Esophagus muscularis mucosa (tissue), 4 donors: ENCODE measurements at regions of chr19 and their contacts with region 1.

Region 1: GRCh38 chr19:48674921-48675824 is 2.4 kb upstream of the NTN5 start:
- DNase-seq: peak; percentile 93
- H3K4me3 ChIP-seq: peak overlapping the region in 2 of 4 donors; percentile 1 to 2
- H3K27ac ChIP-seq: no peak overlapping the region
- H3K4me1 ChIP-seq: peaks cover 7 to 14% (median 9%) of the 10 kb centered on the region in 4 donors
- H3K27me3 ChIP-seq: no peaks in the 10 kb centered on the region
- CTCF ChIP-seq: peak; percentile 85 to 94 (median 86)
- EP300 ChIP-seq: no peak
- POLR2A ChIP-seq: no peak

Region 2: DNA sequence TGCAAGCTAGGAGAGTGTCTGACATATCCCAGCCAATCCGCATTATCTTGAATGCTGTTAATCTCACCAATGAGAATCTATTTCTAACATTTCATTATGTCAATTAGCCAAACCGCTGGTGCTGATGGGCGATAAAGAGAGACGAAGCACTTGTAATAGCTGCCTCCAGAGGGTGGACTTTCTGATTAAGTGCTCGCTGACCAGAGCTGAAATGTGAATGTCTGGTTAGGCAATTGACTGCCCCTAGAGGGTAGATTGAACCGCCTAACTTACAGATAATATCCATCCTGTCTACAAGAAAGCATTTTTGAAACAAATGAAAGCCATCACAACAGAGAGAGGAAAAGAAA is 229.9 kb before region 1 on chr19:
- intact Hi-C with region 1: no loop called
- DNase-seq: no peak
- H3K4me3 ChIP-seq: peak overlapping the region; percentile 85 to 96 (median 89)
- H3K27ac ChIP-seq: peak overlapping the region; percentile 80 to 91 (median 86)
- H3K4me1 ChIP-seq: peaks cover 22 to 38% (median 31%) of the 10 kb centered on the region in 4 donors
- H3K27me3 ChIP-seq: peaks cover 4 to 41% (median 24%) of the 10 kb centered on the region in 4 donors
- CTCF ChIP-seq: peak; percentile 38 to 46 (median 40)
- EP300 ChIP-seq: no peak
- POLR2A ChIP-seq: no peak

Region 3: GRCh38 chr19:48713864-48714758 is 38.9 kb after region 1 on chr19:
- intact Hi-C with region 1: loop called (anchors 5 kb)
- DNase-seq: peak; percentile 100
- H3K4me3 ChIP-seq: peak overlapping the region; percentile 63 to 68 (median 65)
- H3K27ac ChIP-seq: peak overlapping the region; percentile 88 to 90 (median 88)
- H3K4me1 ChIP-seq: peaks cover 46 to 57% (median 55%) of the 10 kb centered on the region in 4 donors
- H3K27me3 ChIP-seq: no peaks in the 10 kb centered on the region
- CTCF ChIP-seq: peak in 1 of 3 experiments; percentile 42
- EP300 ChIP-seq: no peak
- POLR2A ChIP-seq: no peak

Region 4: DNA sequence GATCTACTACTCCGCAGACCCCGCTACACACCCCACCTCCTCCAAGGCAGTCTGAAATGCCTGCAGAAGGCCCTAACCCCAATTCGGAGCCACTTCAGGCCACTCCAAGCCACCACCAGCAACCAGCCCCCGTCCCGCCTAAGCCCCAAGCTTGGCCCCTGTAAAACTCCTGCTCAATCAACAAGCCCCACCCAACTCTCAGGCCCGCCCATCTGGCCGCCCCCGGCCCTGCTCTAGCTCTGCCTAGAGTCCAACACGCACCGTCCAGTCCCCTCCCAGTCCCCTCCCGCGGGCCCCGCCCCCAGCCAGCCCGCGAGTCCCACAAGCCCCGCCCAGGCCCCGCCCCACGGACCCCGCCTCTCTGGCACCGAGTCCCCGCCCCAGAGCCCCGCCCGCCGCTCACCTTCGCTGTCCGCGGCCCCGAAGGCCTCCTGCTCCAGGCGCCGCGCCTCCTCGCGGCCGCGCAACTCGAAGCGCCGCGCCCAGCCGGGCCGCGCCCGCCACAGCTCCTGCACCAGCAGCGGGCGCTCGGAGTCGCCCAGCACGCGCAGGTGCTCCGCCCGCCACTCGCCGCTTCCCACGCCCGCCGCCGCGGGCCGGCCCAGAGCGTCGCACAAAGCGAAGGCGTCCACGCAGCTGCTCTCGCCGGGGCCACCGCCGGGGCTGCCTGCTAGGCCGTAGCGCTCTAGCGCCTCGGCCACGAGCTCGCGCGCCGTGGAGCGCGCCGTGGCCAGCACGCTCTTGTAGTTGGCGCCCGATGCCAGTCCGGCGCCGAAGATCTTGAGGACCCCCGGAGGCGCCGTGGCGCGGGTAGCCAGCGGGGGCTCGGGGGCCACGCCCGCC is 63.6 kb after region 1 on chr19:
- intact Hi-C with region 1: loop called (anchors 2 kb)
- DNase-seq: peak; percentile 96
- H3K4me3 ChIP-seq: peak overlapping the region; percentile 60 to 77 (median 66)
- H3K27ac ChIP-seq: peak overlapping the region; percentile 70 to 82 (median 75)
- H3K4me1 ChIP-seq: peaks cover 6 to 39% (median 35%) of the 10 kb centered on the region in 4 donors
- H3K27me3 ChIP-seq: peaks cover 0 to 12% (median 2%) of the 10 kb centered on the region in 4 donors
- CTCF ChIP-seq: peak; percentile 38 to 66 (median 53)
- EP300 ChIP-seq: no peak
- POLR2A ChIP-seq: no peak